Activated CD4-positive, alpha-beta memory T cell treated with anti-CD3 and anti-CD28 coated beads for 36 hours (primary cell): ENCODE measurements at regions of chr6 and their contacts with region 1.

Region 1: DNA sequence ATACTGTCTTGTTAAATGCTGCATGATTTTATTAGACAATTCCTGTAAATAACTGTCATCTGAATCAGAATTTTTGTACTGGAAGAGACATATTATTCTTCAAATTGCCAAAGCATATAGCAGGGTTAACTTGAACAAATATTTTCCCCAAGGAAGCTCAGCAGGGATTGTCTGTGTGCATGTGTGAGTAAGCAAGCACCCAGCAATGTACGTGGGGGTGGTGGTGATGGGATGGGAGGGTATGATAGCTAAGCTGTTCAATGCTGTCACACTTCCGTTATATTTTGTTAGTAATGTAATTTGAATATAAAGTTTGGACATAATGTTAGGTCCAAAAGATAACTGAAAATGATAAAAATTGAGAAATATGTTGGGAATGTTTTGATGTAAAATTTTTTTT is 118.1 kb downstream of the MYB start:
- DNase-seq: no peak
- H3K4me3 Mint-ChIP-seq: no peak overlapping the region
- H3K27ac Mint-ChIP-seq: no peak overlapping the region
- H3K4me1 Mint-ChIP-seq: peaks cover 17% of the 10 kb centered on the region
- H3K27me3 Mint-ChIP-seq: no peaks in the 10 kb centered on the region

Region 2: GRCh38 chr6:135231469-135231844 is 67.8 kb before region 1 on chr6:
- CTCF ChIA-PET with region 1: no interaction called
- POLR2A ChIA-PET with region 1: no interaction called
- intact Hi-C with region 1: loop called (anchors 1 kb)
- DNase-seq: peak; percentile 60
- H3K4me3 Mint-ChIP-seq: no peak overlapping the region
- H3K27ac Mint-ChIP-seq: peak overlapping the region; percentile 2
- H3K4me1 Mint-ChIP-seq: peaks cover 20% of the 10 kb centered on the region
- H3K27me3 Mint-ChIP-seq: no peaks in the 10 kb centered on the region

Region 3: DNA sequence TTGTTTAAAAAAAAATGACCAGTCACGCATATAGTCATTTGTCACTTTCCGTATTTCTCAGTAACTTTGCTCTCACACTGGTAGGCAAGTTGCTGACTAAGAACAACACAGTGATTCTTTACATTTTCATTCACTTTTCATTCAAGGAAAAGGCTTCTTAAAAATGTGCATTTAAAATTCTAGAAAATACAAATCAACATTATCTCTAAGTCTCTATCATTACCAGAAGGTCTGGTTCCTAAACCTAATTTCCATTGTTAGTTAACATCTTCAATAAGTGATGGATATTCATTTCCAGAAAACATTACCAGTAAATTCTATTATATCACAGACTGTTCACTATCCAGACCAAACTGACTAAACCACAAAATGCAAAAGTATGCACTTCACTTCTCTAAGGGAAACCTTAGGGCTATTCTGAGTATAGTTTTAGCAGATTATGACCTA is 82.9 kb after region 1 on chr6:
- CTCF ChIA-PET with region 1: no interaction called
- POLR2A ChIA-PET with region 1: no interaction called
- intact Hi-C with region 1: loop called (anchors 2 kb)
- DNase-seq: no peak
- H3K4me3 Mint-ChIP-seq: no peak overlapping the region
- H3K27ac Mint-ChIP-seq: no peak overlapping the region
- H3K4me1 Mint-ChIP-seq: peaks cover 6% of the 10 kb centered on the region
- H3K27me3 Mint-ChIP-seq: no peaks in the 10 kb centered on the region

Region 4: GRCh38 chr6:135423649-135424128 is 124.4 kb after region 1 on chr6:
- CTCF ChIA-PET with region 1: no interaction called
- POLR2A ChIA-PET with region 1: no interaction called
- intact Hi-C with region 1: loop called (anchors 5 kb)
- DNase-seq: no peak
- H3K4me3 Mint-ChIP-seq: no peak overlapping the region
- H3K27ac Mint-ChIP-seq: no peak overlapping the region
- H3K4me1 Mint-ChIP-seq: peaks cover 4% of the 10 kb centered on the region
- H3K27me3 Mint-ChIP-seq: no peaks in the 10 kb centered on the region

Region 5: DNA sequence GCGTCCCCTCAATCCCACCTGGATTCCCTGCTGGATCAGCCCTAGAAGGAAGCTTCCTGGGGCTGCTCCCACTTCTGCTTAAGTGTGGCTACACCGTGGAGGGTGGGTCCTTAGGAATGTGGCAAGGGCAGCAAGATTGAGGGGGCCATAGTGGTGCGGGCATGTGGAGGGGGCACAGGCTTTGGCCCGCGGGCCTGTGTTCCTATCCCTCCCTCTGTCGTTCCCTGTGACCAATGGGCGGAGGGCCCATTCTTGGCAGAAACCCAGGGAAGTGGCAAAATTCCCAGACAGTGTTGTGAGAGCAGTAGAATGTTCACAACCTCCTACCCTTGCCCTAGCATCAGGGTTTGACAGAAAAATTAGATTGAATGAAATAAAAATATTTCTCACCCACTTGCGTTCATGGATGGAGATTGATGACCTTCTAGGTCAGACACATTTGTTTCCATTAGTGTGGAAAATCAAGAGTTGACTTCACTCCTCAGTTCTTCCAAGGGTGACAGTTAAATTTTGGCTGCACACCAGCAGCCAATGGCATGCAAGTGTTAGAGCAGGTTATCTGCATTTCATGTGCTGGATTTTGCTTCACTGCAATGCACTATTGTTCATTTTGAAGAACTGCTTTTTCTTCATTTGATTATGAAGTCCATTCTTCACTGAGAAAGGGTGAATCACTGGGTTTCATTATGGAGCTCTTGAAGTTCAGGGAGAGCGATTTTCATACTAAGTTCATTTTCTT is 247.6 kb after region 1 on chr6:
- CTCF ChIA-PET with region 1: no interaction called
- POLR2A ChIA-PET with region 1: no interaction called
- intact Hi-C with region 1: no loop called
- DNase-seq: no peak
- H3K4me3 Mint-ChIP-seq: no peak overlapping the region
- H3K27ac Mint-ChIP-seq: no peak overlapping the region
- H3K4me1 Mint-ChIP-seq: no peaks in the 10 kb centered on the region
- H3K27me3 Mint-ChIP-seq: peaks cover 17% of the 10 kb centered on the region